ENCODE measurements at regions of chr14 and their contacts with region 1.

Region 1: DNA sequence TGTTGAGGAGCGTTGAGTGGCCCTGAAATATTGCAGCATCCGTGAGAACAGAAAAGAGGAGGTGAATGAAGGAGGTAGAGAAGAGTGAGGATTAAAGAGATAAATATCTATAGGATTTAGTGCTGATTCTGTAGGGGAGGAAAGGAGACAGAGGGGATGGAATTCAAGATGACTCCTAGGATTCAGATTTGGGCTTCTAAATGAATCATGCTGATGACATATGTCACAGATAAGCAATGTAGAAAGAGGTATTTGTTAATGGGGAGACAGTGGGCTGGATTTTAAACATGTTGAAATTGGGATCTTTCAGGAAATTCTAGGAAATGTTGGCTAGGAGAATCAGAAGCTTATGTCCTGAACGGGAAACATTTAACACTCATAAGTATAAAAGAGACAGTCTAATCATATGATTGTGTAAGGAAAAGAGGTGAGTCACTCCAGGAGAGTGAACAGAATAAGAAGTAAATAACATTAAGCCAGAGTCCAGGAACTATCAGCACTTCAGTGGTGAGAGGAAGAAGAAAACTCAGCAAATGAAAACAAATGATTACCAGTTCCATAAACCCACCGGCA is 58.1 kb upstream of the DIO2 start:
- DNase-seq: no peak
- ATAC-seq: peak in 1 of 4 donors; percentile 57
- H3K4me3 ChIP-seq: no peak overlapping the region
- H3K27ac ChIP-seq: no peak overlapping the region
- H3K4me1 ChIP-seq: no peaks in the 10 kb centered on the region
- H3K27me3 ChIP-seq: no peaks in the 10 kb centered on the region
- CTCF ChIP-seq: no peak
- POLR2A ChIP-seq: no peak

Region 2: GRCh38 chr14:80136361-80136760 is 133.1 kb before region 1 on chr14:
- intact Hi-C with region 1: loop called in 1 of 10 experiments (anchors 5 kb)
- DNase-seq: no peak
- ATAC-seq: no peak
- H3K4me3 ChIP-seq: no peak overlapping the region
- H3K27ac ChIP-seq: peak overlapping the region in 4 of 12 donors; percentile 49 to 66 (median 54)
- H3K4me1 ChIP-seq: no peaks in the 10 kb centered on the region
- H3K27me3 ChIP-seq: no peaks in the 10 kb centered on the region
- CTCF ChIP-seq: no peak
- POLR2A ChIP-seq: no peak

Region 3: GRCh38 chr14:80425686-80426085 is 156.2 kb after region 1 on chr14:
- intact Hi-C with region 1: no loop called
- DNase-seq: peak in 2 of 5 donors; percentile 25 to 34
- ATAC-seq: peak; percentile 55 to 97 (median 88)
- H3K4me3 ChIP-seq: no peak overlapping the region
- H3K27ac ChIP-seq: peak overlapping the region in 3 of 12 donors; percentile 3 to 29 (median 9)
- H3K4me1 ChIP-seq: peaks cover 0 to 5% (median 0%) of the 10 kb centered on the region in 12 donors
- H3K27me3 ChIP-seq: no peaks in the 10 kb centered on the region
- CTCF ChIP-seq: no peak
- POLR2A ChIP-seq: no peak

Measured in heart left ventricle (tissue), 16 donors.